ENCODE measurements at regions of chr9 and their contacts with region 1.

Region 1: DNA sequence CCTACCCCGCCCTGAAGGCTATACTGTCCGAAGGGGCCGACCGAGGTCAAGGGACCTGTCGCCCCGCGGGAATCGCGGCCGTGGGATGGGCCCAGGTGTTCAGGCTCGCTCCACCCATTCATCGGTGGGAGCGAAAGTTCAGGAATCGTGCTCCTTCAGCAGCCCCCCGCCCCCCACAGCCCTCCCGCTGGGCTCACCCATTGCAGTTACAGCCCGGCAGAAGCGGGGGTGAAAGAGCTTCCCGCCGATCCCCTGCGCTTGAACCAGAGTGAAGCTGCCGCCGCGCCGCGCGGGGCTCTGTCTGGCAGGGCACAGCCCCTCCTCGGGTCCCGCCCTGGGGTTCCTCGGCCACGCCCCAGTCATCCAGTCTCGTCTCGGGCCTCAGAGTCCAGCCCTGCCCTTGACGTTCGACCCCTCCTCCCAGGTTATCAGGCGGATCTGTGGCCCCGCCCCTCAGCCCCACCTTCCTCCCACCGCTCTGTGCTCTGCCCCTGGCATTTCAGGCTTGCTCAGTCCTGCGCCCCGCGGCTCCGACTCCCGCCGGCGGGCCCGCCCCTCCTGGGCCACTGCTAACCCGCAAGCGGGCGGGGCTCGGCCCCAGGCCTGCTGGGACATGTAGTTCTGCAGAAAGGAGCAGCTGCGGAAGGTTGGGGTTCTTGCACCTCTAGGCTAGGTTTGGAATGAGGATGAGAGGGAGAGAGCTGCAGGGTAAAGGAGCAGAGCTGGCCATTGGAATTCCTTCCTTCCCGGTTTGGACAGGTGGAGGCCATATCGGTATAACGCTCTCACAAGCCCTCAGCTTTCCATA is at the start of gene MYORG:
- DNase-seq: peak; percentile 94 to 98 (median 96)
- H3K4me3 ChIP-seq: peak within 1 kb of the TSS; percentile 70 to 77
- H3K4me3 Mint-ChIP-seq: peak within 1 kb of the TSS; percentile 92 to 98 (median 94)
- H3K27ac ChIP-seq: peak within 1 kb of the TSS; percentile 49
- H3K27ac Mint-ChIP-seq: peak within 1 kb of the TSS; percentile 58 to 97 (median 93)
- H3K4me1 ChIP-seq: peaks cover 39% of the 10 kb centered on the region
- H3K4me1 Mint-ChIP-seq: peaks cover 33 to 54% (median 44%) of the 10 kb centered on the region in 4 donors
- H3K27me3 ChIP-seq: no peaks in the 10 kb centered on the region
- H3K27me3 Mint-ChIP-seq: no peaks in the 10 kb centered on the region
- total RNA-seq, gene MYORG: 1.3 to 1.4 TPM

Region 2: GRCh38 chr9:34010979-34011378 is 365.8 kb before region 1 on chr9:
- CTCF ChIA-PET with region 1: no interaction called
- POLR2A ChIA-PET with region 1: no interaction called
- intact Hi-C with region 1: loop called (anchors 1 kb)
- DNase-seq: peak in 4 of 5 donors; percentile 14 to 26 (median 20)
- H3K4me3 ChIP-seq: no peak overlapping the region
- H3K4me3 Mint-ChIP-seq: no peak overlapping the region
- H3K27ac ChIP-seq: no peak overlapping the region
- H3K27ac Mint-ChIP-seq: no peak overlapping the region
- H3K4me1 ChIP-seq: no peaks in the 10 kb centered on the region
- H3K4me1 Mint-ChIP-seq: peaks cover 0 to 4% (median 0%) of the 10 kb centered on the region in 4 donors
- H3K27me3 ChIP-seq: no peaks in the 10 kb centered on the region
- H3K27me3 Mint-ChIP-seq: no peaks in the 10 kb centered on the region

Region 3: GRCh38 chr9:34126207-34127034 is 250.4 kb before region 1 on chr9 and contains the start of gene DCAF12:
- CTCF ChIA-PET with region 1: no interaction called
- POLR2A ChIA-PET with region 1: interaction called, 3 read pairs
- intact Hi-C with region 1: loop called (anchors 1 kb)
- DNase-seq: peak; percentile 90 to 92 (median 91)
- H3K4me3 ChIP-seq: peak within 1 kb of the TSS; percentile 88 to 92
- H3K4me3 Mint-ChIP-seq: peak within 1 kb of the TSS; percentile 96 to 100 (median 98)
- H3K27ac ChIP-seq: peak within 1 kb of the TSS; percentile 83
- H3K27ac Mint-ChIP-seq: peak within 1 kb of the TSS; percentile 95 to 99 (median 99)
- H3K4me1 ChIP-seq: peaks cover 45% of the 10 kb centered on the region
- H3K4me1 Mint-ChIP-seq: peaks cover 39 to 58% (median 45%) of the 10 kb centered on the region in 4 donors
- H3K27me3 ChIP-seq: no peaks in the 10 kb centered on the region
- H3K27me3 Mint-ChIP-seq: no peaks in the 10 kb centered on the region
- total RNA-seq, gene DCAF12: 29.7 to 31.0 TPM

Region 4: GRCh38 chr9:34178520-34179212 is 198.1 kb before region 1 on chr9 and contains the start of gene UBAP1:
- CTCF ChIA-PET with region 1: no interaction called
- POLR2A ChIA-PET with region 1: interaction called, 5 read pairs
- intact Hi-C with region 1: loop called (anchors 2 kb)
- DNase-seq: peak; percentile 93 to 98 (median 94)
- H3K4me3 ChIP-seq: peak within 1 kb of the TSS; percentile 57 to 74
- H3K4me3 Mint-ChIP-seq: peak within 1 kb of the TSS; percentile 91 to 100 (median 99)
- H3K27ac ChIP-seq: peak within 1 kb of the TSS; percentile 94
- H3K27ac Mint-ChIP-seq: peak within 1 kb of the TSS; percentile 85 to 100 (median 100)
- H3K4me1 ChIP-seq: peaks cover 18% of the 10 kb centered on the region
- H3K4me1 Mint-ChIP-seq: peaks cover 13 to 27% (median 15%) of the 10 kb centered on the region in 4 donors
- H3K27me3 ChIP-seq: no peaks in the 10 kb centered on the region
- H3K27me3 Mint-ChIP-seq: no peaks in the 10 kb centered on the region
- total RNA-seq, gene UBAP1: 34.8 to 36.3 TPM

Region 5: GRCh38 chr9:34585946-34586669 is 209.3 kb after region 1 on chr9:
- CTCF ChIA-PET with region 1: no interaction called
- POLR2A ChIA-PET with region 1: no interaction called
- intact Hi-C with region 1: no loop called
- DNase-seq: no peak
- H3K4me3 ChIP-seq: no peak overlapping the region
- H3K4me3 Mint-ChIP-seq: no peak overlapping the region
- H3K27ac ChIP-seq: no peak overlapping the region
- H3K27ac Mint-ChIP-seq: no peak overlapping the region
- H3K4me1 ChIP-seq: peaks cover 16% of the 10 kb centered on the region
- H3K4me1 Mint-ChIP-seq: peaks cover 12 to 32% (median 18%) of the 10 kb centered on the region in 4 donors
- H3K27me3 ChIP-seq: peaks cover 24% of the 10 kb centered on the region
- H3K27me3 Mint-ChIP-seq: peaks cover 53 to 80% of the 10 kb centered on the region in 2 donors

Measured in CD4-positive, alpha-beta memory T cell (primary cell).